ENCODE measurements at regions of chr12 and their contacts with region 1.

Region 1: DNA sequence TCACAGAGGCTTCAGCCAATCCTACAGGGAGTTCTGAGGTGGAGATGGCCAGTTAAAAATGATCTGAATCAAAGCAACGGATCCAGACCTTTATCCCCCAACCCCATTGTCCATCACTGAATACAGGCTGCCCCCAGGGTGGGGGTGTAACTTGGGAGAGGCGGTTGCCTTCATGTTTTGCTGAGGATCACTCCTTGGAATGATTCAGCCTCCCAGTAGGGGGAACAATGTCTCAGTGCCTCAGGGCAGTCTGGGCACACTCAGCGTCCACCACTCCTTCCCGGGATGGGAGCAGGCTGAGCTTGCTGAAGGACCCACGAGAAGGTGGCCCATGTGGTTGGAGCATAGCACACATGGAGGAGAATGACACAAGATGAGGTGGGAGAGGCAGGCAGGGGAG is 60.2 kb downstream of the RFX4 start:
- DNase-seq: no peak
- ATAC-seq: no peak
- H3K4me3 ChIP-seq: no peak overlapping the region
- H3K27ac ChIP-seq: no peak overlapping the region
- H3K4me1 ChIP-seq: no peaks in the 10 kb centered on the region
- H3K27me3 ChIP-seq: peaks cover 1% of the 10 kb centered on the region; the same call in 1 of the 2 replicates
- CTCF ChIP-seq: no peak
- POLR2A ChIP-seq: no peak
- RAD21 ChIP-seq: no peak

Region 2: DNA sequence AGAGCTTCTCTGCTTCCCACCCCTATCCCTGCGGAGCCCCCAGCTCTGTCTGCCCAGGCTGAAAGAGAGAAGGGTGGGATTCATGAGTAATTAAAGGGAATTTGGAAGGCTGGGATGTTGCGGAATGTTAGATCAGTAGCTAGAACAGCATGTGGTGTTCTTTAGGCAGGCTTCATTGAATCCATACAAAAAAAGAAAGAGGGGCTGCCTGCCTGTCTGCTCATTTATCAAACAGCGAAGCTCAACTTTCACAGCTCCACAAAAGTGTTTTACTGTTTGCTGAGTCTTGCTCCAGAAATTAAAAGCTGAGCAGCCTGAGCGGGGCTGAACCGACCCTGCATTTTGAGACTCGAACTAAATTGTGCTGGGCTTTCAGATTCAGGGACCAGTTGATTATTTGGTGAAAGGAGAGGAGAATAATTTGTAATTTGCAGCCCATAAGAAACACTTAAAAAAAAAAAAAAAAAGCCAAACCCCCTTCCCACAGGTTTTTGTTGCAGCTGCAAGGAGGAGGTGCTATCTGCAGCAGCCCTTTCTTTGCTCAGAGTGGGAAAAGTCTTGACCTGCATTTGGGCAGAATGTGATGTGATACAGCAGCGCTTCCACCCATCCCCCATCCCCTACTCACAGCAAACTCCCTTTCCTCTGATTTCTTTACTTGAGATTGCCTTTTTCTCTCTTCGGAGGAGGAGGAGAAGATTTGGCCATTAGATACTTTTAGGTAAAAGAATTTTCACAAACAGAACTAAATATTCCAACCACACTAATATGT is 29.5 kb after region 1 on chr12:
- CTCF ChIA-PET with region 1: no interaction called
- POLR2A ChIA-PET with region 1: no interaction called
- dilution Hi-C with region 1: no loop called
- in situ Hi-C with region 1: no loop called
- intact Hi-C with region 1: loop called (anchors 2 kb)
- DNase-seq: no peak
- ATAC-seq: no peak
- H3K4me3 ChIP-seq: no peak overlapping the region
- H3K27ac ChIP-seq: no peak overlapping the region
- H3K4me1 ChIP-seq: no peaks in the 10 kb centered on the region
- H3K27me3 ChIP-seq: peaks cover 16% of the 10 kb centered on the region
- CTCF ChIP-seq: no peak
- POLR2A ChIP-seq: no peak
- RAD21 ChIP-seq: no peak